ENCODE measurements at regions of chr11 and their contacts with region 1.

Region 1: GRCh38 chr11:102007567-102008437 is 39.4 kb upstream of the CFAP300 start:
- DNase-seq: no peak
- ATAC-seq: peak; percentile 72

Region 2: DNA sequence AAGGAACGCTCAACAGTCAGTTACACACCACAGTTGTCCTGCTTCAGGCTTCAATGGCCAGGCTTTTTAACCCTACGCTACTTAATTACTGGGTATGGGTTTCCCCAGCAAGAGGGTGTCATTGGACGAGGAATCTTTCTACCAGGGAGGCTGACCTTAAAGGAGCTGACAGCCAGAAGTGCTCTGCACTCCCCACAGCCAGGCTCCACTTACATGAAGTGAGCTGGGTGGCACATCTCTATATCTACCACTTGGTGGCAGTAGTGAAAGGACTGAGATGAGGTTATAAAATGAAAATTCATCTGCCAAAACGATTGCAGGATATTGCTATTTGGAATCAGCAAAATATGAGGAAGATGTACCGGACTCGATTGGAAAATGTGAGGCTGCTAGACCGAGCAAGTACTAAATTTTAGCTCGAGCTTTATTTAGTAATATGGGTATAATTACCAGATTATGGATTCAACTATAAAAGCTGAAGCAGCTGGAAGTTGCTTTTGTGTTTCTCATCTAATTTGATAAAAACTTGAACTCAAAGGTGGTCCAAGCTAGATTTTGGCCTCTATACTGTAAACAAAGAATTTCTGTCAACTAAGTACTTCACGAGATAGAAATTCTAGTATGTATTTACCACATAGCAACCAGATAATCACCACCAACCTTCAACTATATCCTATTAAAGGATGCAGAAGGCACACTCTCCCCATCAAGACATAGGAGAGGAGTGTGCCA is 146.9 kb before region 1 on chr11:
- intact Hi-C with region 1: loop called (anchors 5 kb)
- DNase-seq: no peak
- ATAC-seq: peak; percentile 94

Measured in Right ventricle myocardium superior (tissue), 1 donor.